Motor neuron (in vitro differentiated cells): ENCODE measurements at regions of chr20 and their contacts with region 1.

Region 1: DNA sequence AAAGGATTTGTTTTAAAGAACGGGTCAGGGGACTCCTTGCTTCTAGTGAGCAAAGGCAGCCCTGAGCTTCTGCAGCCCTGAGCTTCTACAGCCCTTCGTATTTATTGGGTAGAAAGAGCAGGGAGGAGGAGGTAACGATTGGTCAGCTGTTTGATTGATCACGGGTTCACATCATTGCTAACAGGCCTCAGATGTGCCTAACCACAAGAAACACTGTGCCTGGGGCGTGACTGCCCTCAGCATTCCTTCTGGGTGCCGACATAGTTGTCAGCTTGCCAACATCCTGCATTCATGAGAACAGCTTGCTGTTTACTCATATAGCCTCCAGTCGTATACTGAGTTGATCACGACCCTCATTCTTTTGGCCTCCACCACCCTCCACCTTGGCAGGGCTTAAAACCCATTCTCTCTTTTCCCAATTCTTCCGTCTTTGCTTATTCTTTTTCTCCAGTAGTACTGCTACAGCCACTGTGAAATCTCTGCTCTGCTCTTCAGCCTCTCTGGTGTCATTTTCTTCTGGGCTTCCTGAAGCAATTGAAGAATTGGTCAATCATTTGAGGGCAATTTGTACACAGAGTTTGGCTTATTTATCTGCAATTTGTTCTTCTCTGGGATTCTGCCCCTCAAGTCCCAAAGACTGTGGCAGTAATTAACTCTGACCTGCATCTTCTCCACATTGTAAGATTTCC is 25.4 kb upstream of the NOP56 start:
- ATAC-seq: peak in 3 of 8 experiments; percentile 54 to 96 (median 72)
- H3K4me3 ChIP-seq: no peak overlapping the region
- H3K27ac ChIP-seq: no peak overlapping the region
- H3K4me1 ChIP-seq: no peaks in the 10 kb centered on the region

Region 2: GRCh38 chr20:2508631-2509467 is 118.1 kb before region 1 on chr20 and contains the start of gene ZNF343:
- in situ Hi-C with region 1: loop called in 2 of 9 experiments (anchors 25 kb)
- ATAC-seq: peak; percentile 83 to 98 (median 97)
- H3K4me3 ChIP-seq: peak within 1 kb of the TSS; percentile 67 to 97 (median 77)
- H3K27ac ChIP-seq: peak within 1 kb of the TSS; percentile 89 to 94
- H3K4me1 ChIP-seq: peaks cover 4 to 9% of the 10 kb centered on the region in 2 donors
- total RNA-seq, gene ZNF343: 8.8 to 14.4 (median 10.9) TPM

Region 3: GRCh38 chr20:2524709-2525506 is 102.1 kb before region 1 on chr20:
- in situ Hi-C with region 1: loop called in 3 of 9 experiments (anchors 25 kb)
- ATAC-seq: peak; percentile 57 to 79 (median 73)
- H3K4me3 ChIP-seq: peak overlapping the region; percentile 54 to 73 (median 66)
- H3K27ac ChIP-seq: no peak overlapping the region
- H3K4me1 ChIP-seq: no peaks in the 10 kb centered on the region